ENCODE measurements at regions of chr22 and their contacts with region 1.

Region 1: GRCh38 chr22:25048659-25049647 is 96.4 kb downstream of the KIAA1671 start:
- DNase-seq: peak; percentile 93
- H3K4me3 Mint-ChIP-seq: no peak overlapping the region
- H3K27ac Mint-ChIP-seq: no peak overlapping the region
- H3K4me1 Mint-ChIP-seq: peaks cover 2% of the 10 kb centered on the region
- H3K27me3 Mint-ChIP-seq: peaks cover 4% of the 10 kb centered on the region

Region 2: DNA sequence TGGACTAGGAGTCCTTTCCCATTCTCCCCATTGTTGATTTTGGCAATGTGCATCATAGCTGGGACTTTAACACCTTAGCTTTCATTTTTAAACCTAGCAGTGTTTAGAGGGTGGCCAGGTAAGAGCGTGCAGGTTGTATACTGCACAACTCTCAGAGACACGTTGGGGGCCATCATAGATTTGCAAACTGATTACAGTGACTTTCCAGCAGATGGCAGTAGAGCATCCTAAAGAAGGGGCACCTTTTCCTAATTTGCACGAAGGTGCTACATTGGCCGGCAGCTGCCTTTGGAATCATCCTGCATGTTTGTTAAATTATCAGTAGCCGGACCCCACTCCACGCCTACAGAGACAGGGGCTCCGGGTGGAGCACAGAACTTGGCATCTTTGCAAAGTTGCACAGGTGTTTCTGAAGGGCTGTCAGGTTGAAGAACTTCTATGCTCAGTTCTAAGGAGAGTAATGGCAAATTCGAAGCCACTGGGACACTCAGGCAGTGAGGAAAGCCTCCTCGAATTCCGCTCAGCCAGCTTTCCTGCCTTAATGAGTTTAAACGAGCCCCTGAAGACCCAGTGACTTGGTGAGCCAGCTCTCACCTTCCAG is 110.1 kb before region 1 on chr22:
- intact Hi-C with region 1: loop called (anchors 1 kb)
- DNase-seq: peak; percentile 86
- H3K4me3 Mint-ChIP-seq: no peak overlapping the region
- H3K27ac Mint-ChIP-seq: no peak overlapping the region
- H3K4me1 Mint-ChIP-seq: no peaks in the 10 kb centered on the region
- H3K27me3 Mint-ChIP-seq: peaks cover 2% of the 10 kb centered on the region

Region 3: GRCh38 chr22:24951942-24952836 is 96.8 kb before region 1 on chr22 and contains the start of gene KIAA1671:
- intact Hi-C with region 1: loop called (anchors 1 kb)
- DNase-seq: peak; percentile 98
- H3K4me3 Mint-ChIP-seq: peak within 1 kb of the TSS; percentile 87
- H3K27ac Mint-ChIP-seq: peak within 1 kb of the TSS; percentile 62
- H3K4me1 Mint-ChIP-seq: peaks cover 20% of the 10 kb centered on the region
- H3K27me3 Mint-ChIP-seq: peaks cover 54% of the 10 kb centered on the region
- total RNA-seq, gene KIAA1671: 11.2 and 11.4 TPM in 2 replicates

Region 4: GRCh38 chr22:25572708-25573171 is 523.8 kb after region 1 on chr22:
- intact Hi-C with region 1: no loop called
- DNase-seq: no peak
- H3K4me3 Mint-ChIP-seq: peak overlapping the region; percentile 8
- H3K27ac Mint-ChIP-seq: peak overlapping the region; percentile 45
- H3K4me1 Mint-ChIP-seq: peaks cover 46% of the 10 kb centered on the region
- H3K27me3 Mint-ChIP-seq: no peaks in the 10 kb centered on the region